WTC11 (cell line): ENCODE measurements at regions of chr11 and their contacts with region 1.

Region 1: GRCh38 chr11:111454561-111455192 is 57.5 kb downstream of the BTG4 start:
- DNase-seq: peak; percentile 81
- ATAC-seq: peak; percentile 84
- H3K4me3 Mint-ChIP-seq: peak overlapping the region; percentile 65
- H3K27ac Mint-ChIP-seq: no peak overlapping the region
- H3K4me1 Mint-ChIP-seq: peaks cover 14% of the 10 kb centered on the region
- H3K27me3 Mint-ChIP-seq: no peaks in the 10 kb centered on the region; the same call in none of the 2 replicates
- CTCF ChIP-seq: peak; percentile 81

Region 2: DNA sequence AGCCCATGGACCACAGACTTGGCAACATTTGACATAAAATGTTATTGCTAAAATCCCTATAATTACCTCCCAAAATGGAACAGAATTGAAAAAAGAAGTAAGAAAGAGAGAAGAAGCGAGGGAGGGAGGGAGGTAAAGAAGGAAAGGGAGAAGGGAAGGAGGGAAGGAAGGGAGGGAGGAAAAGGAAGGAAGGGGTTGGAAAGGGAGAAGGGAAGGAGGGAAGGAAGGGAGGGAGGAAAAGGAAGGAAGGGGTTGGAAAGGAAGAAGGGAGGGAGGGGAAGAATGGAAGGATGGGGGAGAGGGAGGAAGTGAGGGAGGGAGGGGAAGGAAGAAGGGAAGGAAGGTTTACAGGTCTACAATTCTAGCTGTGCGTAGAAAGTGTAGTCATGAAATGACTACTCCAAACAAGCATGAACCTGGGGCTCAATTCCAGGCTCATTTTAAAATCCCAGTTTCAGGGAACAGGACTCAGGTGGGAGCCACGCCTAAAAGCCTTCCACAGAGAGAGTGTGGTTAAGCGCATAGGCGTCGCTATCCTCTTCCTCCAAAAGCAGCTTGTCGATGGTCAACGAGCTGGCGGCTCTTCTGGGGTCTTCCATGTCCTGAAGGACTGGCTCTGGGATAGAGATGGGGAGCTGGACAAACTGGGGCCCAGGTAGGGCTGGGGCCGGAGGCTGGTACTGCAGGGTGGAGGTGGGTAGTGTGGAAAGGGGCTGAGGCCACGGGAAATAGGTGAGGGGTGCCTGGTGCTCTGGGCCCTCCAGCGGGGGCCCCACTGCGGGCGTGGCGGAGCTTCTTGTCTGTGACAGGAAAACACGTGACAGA is 100.7 kb before region 1 on chr11:
- CTCF ChIA-PET with region 1: no interaction called
- POLR2A ChIA-PET with region 1: no interaction called
- DNase-seq: no peak
- ATAC-seq: no peak
- H3K4me3 Mint-ChIP-seq: no peak overlapping the region
- H3K27ac Mint-ChIP-seq: no peak overlapping the region
- H3K4me1 Mint-ChIP-seq: no peaks in the 10 kb centered on the region
- H3K27me3 Mint-ChIP-seq: no peaks in the 10 kb centered on the region; the same call in 1 of the 2 replicates
- CTCF ChIP-seq: no peak

Region 3: DNA sequence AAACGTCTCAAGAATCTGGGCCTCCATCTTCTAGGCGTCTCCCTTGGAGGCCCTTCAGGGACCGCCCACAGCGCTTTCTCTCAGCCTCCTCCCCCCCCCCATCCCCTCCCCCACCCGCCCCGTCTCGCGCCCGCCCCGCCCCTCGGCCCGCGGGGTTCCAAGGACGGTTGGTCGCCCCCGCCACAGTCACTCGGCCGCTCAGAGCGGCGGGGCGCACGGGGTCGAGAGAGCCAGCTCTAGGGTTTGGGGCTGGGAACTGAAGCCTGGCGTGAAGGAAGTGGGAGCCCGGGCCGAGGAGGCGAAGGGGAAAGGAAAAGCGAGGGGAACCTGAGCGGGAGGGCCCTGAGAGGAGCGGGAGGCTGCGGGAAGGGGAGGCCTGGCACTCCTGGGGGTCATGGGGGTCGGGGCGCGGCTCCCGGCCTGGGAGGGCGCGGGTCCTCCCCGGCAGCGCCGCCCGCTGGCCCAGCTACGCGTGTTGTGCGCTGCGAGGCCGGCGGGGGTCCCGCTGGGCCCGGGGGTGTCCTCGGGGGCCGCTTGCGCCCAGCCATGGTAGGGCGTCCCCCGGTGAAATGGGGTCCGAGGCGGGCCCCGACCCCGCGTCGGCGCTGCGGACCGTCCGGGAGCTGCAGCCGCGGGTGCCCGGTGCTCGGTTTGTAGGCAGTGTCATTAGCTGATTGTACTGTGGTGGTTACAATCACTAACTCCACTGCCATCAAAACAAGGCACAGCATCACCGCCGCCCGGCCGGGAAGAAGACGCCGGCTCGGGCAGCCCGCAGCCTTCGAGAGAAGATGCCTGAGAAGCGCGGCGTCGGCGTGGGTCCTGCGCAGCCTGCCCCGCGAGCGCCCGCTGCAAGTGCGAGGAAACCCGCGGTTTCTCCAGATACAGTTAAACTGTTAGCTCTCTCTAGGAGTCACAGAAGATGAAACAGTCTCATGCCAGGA is 57.9 kb after region 1 on chr11 and contains the start of gene BTG4:
- CTCF ChIA-PET with region 1: interaction called, 19 read pairs
- POLR2A ChIA-PET with region 1: no interaction called
- DNase-seq: peak; percentile 58
- ATAC-seq: peak; percentile 65
- H3K4me3 Mint-ChIP-seq: peak within 1 kb of the TSS; percentile 83
- H3K27ac Mint-ChIP-seq: no peak within 1 kb of the TSS
- H3K4me1 Mint-ChIP-seq: peaks cover 21% of the 10 kb centered on the region
- H3K27me3 Mint-ChIP-seq: peaks cover 49% of the 10 kb centered on the region
- CTCF ChIP-seq: no peak
- total RNA-seq, gene BTG4: 0.18 TPM in 1 of 3 replicates, not detected in the others

Region 4: GRCh38 chr11:111540114-111540936 is 85.6 kb after region 1 on chr11 and contains the start of gene LAYN:
- CTCF ChIA-PET with region 1: interaction called, 10 read pairs
- POLR2A ChIA-PET with region 1: no interaction called
- DNase-seq: peak; percentile 66
- ATAC-seq: peak; percentile 59
- H3K4me3 Mint-ChIP-seq: peak within 1 kb of the TSS; percentile 81
- H3K27ac Mint-ChIP-seq: no peak within 1 kb of the TSS; the same call in 1 of the 2 replicates
- H3K4me1 Mint-ChIP-seq: peaks cover 30% of the 10 kb centered on the region
- H3K27me3 Mint-ChIP-seq: peaks cover 67% of the 10 kb centered on the region
- CTCF ChIP-seq: no peak
- total RNA-seq, gene LAYN: 3.0 to 3.7 TPM (median 3.6 TPM) in 3 replicates

Region 5: GRCh38 chr11:111561791-111562325 is 107.2 kb after region 1 on chr11:
- CTCF ChIA-PET with region 1: interaction called, 12 read pairs
- POLR2A ChIA-PET with region 1: interaction called, 3 read pairs
- DNase-seq: no peak
- ATAC-seq: peak; percentile 65
- H3K4me3 Mint-ChIP-seq: no peak overlapping the region
- H3K27ac Mint-ChIP-seq: 0 out of 2 replicates have a peak overlapping the region, but pooled peaks have one; percentile 30
- H3K4me1 Mint-ChIP-seq: peaks cover 33% of the 10 kb centered on the region
- H3K27me3 Mint-ChIP-seq: peaks cover 3% of the 10 kb centered on the region; the same call in 1 of the 2 replicates
- CTCF ChIP-seq: no peak

Region 6: GRCh38 chr11:111707039-111707690 is 252.5 kb after region 1 on chr11:
- CTCF ChIA-PET with region 1: no interaction called
- POLR2A ChIA-PET with region 1: no interaction called
- DNase-seq: no peak
- ATAC-seq: no peak
- H3K4me3 Mint-ChIP-seq: no peak overlapping the region
- H3K27ac Mint-ChIP-seq: no peak overlapping the region
- H3K4me1 Mint-ChIP-seq: no peaks in the 10 kb centered on the region
- H3K27me3 Mint-ChIP-seq: no peaks in the 10 kb centered on the region
- CTCF ChIP-seq: no peak